Caco-2 (cell line): ENCODE measurements at regions of chr20 and their contacts with region 1.

Region 1: DNA sequence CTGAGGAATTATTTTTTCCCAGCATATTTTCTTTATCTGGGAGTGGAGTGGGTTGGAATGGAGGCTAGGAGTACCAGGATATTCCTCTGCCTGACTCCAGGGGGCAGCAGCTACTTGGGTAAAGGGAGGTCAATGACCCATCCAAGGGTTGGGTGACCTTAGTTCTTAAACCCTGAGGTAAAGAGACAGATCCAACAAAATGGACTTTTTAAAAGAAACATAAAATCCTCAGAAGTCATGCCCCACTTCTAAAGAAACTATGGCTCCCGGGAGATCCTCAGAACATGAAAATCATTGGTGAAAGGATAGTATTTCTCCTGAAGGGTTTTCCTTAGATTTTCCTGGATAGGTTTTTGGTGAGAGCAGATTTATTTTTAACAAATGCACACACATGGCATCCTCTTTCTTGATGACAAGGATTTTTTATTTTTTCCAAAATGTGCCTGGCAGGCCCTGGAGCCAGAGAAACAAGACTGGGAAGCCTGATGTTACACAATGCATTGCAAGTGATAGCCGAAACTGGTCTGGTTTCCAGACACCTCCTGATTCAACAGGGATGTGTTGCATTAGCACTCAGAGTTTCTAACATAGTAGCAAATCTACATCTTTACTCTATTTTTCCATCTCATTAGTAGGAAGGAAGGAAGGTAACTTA is 240.9 kb upstream of the BTBD3 start:
- DNase-seq: peak; percentile 68 to 84
- H3K4me3 ChIP-seq: no peak overlapping the region
- H3K4me3 Mint-ChIP-seq: no peak overlapping the region
- H3K27ac Mint-ChIP-seq: no peak overlapping the region
- H3K4me1 ChIP-seq: no peaks in the 10 kb centered on the region; the same call in 1 of the 2 replicates
- H3K4me1 Mint-ChIP-seq: peaks cover 1% of the 10 kb centered on the region
- H3K27me3 ChIP-seq: no peaks in the 10 kb centered on the region
- H3K27me3 Mint-ChIP-seq: peaks cover 7% of the 10 kb centered on the region
- CTCF ChIP-seq: peak; percentile 94 to 95

Region 2: DNA sequence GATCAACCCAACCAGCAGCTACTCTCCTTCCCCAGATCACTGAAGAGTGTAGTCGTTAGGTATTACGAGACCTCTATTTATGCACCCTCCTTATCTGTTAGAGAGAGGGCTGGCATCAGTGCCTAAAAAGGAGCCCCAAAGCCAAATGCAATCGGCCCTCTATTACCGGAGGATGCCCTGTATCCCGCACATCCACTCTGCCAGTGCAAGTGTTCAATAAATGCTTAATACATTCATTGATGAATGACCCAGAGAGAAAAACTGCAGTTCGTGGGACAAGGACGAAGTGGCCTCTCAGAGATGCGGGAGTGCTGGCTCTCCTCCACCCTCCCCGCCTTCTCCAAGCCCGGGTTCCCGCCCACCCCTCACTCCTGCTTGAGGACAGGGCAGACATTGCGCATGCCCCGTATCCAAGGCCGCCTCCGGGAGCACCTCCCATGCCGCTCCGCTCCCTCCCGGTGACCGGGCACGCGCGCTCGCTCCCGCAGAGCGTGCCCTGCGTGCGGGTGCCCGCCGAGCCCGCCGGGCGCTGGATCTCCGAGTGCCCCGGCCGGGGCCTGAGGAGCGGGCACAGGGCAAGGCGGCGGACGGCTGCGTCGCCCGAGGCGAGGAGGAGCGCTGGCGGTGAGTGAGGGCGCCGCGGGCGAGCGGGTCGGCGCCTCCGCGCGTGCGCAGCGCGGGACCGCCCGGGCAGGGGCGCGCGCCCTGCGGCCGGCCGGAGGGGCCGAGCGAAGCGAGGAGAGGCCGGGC is 213.7 kb after region 1 on chr20:
- CTCF ChIA-PET with region 1: no interaction called
- POLR2A ChIA-PET with region 1: no interaction called
- intact Hi-C with region 1: loop called (anchors 5 kb)
- DNase-seq: peak; percentile 96 to 97
- H3K4me3 ChIP-seq: peak overlapping the region; percentile 85
- H3K4me3 Mint-ChIP-seq: peak overlapping the region; percentile 75
- H3K27ac Mint-ChIP-seq: peak overlapping the region; percentile 72
- H3K4me1 ChIP-seq: peaks cover 10% of the 10 kb centered on the region; the same call in 1 of the 2 replicates
- H3K4me1 Mint-ChIP-seq: peaks cover 20% of the 10 kb centered on the region
- H3K27me3 ChIP-seq: no peaks in the 10 kb centered on the region
- H3K27me3 Mint-ChIP-seq: no peaks in the 10 kb centered on the region
- CTCF ChIP-seq: no peak

Region 3: GRCh38 chr20:11965602-11966001 is 288.8 kb after region 1 on chr20:
- CTCF ChIA-PET with region 1: no interaction called
- POLR2A ChIA-PET with region 1: no interaction called
- intact Hi-C with region 1: loop called (anchors 1 kb)
- DNase-seq: peak in 1 of 2 experiments; percentile 11
- H3K4me3 ChIP-seq: no peak overlapping the region
- H3K4me3 Mint-ChIP-seq: no peak overlapping the region
- H3K27ac Mint-ChIP-seq: no peak overlapping the region
- H3K4me1 ChIP-seq: peaks cover 17% of the 10 kb centered on the region
- H3K4me1 Mint-ChIP-seq: peaks cover 21% of the 10 kb centered on the region
- H3K27me3 ChIP-seq: no peaks in the 10 kb centered on the region
- H3K27me3 Mint-ChIP-seq: no peaks in the 10 kb centered on the region
- CTCF ChIP-seq: peak in 1 of 2 experiments; percentile 10

Region 4: DNA sequence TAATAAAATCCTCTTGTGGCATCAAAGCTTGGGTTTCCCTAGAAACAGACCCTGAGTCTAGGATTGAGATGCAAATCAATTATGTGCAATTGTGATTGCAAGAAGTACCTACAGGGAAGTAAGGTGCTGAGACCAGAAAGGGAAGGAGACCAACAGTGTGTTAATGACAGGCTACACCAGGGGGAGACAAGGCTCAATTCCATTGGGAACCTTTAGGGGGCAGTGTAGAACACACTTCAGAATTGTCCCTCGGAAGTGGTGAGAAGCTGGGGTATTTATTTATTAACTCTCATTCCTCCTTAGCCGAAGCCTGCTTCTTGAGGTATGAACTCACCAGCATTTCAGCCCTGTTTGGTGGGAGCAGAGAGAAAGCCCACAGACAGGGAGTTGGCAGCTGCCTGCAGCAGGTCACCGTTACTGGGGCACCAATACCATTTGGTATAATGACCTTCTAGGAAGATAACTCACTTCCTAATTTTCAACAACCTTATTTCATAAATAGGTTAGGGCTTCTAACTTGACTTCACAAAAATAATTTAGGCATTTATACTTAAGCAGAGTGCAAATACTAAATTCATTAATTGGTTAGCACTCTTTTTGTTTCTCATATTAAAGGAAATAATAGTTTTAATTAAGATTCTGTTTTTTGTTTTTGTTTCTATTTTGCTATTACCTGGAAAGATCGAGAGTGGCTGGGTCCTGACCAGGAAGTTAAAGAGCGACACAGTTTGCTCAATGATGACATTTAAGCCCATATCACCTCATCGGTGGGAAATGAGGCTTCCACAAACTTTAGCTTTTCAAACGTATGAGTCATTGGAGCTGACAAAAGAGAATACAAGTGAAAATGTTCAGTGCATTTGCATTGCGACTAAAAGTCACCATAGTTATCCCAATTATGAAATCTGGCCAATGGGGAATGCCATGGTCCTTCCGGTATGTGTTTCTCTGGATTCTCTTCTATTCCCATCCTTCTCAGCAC is 335.8 kb after region 1 on chr20:
- CTCF ChIA-PET with region 1: no interaction called
- POLR2A ChIA-PET with region 1: no interaction called
- intact Hi-C with region 1: loop called (anchors 5 kb)
- DNase-seq: peak; percentile 53 to 76
- H3K4me3 ChIP-seq: no peak overlapping the region
- H3K4me3 Mint-ChIP-seq: no peak overlapping the region
- H3K27ac Mint-ChIP-seq: no peak overlapping the region
- H3K4me1 ChIP-seq: no peaks in the 10 kb centered on the region
- H3K4me1 Mint-ChIP-seq: no peaks in the 10 kb centered on the region
- H3K27me3 ChIP-seq: no peaks in the 10 kb centered on the region; the same call in 1 of the 2 replicates
- H3K27me3 Mint-ChIP-seq: peaks cover 2% of the 10 kb centered on the region
- CTCF ChIP-seq: peak; percentile 98

Region 5: GRCh38 chr20:12287575-12287974 is 610.8 kb after region 1 on chr20:
- CTCF ChIA-PET with region 1: no interaction called
- POLR2A ChIA-PET with region 1: no interaction called
- intact Hi-C with region 1: loop called (anchors 2 kb)
- DNase-seq: peak; percentile 47 to 63
- H3K4me3 ChIP-seq: no peak overlapping the region
- H3K4me3 Mint-ChIP-seq: no peak overlapping the region
- H3K27ac Mint-ChIP-seq: peak overlapping the region; percentile 74
- H3K4me1 ChIP-seq: peaks cover 22% of the 10 kb centered on the region
- H3K4me1 Mint-ChIP-seq: peaks cover 6% of the 10 kb centered on the region
- H3K27me3 ChIP-seq: no peaks in the 10 kb centered on the region
- H3K27me3 Mint-ChIP-seq: no peaks in the 10 kb centered on the region
- CTCF ChIP-seq: peak in 1 of 2 experiments; percentile 40